ENCODE measurements at regions of chr12 and their contacts with region 1.

Region 1: DNA sequence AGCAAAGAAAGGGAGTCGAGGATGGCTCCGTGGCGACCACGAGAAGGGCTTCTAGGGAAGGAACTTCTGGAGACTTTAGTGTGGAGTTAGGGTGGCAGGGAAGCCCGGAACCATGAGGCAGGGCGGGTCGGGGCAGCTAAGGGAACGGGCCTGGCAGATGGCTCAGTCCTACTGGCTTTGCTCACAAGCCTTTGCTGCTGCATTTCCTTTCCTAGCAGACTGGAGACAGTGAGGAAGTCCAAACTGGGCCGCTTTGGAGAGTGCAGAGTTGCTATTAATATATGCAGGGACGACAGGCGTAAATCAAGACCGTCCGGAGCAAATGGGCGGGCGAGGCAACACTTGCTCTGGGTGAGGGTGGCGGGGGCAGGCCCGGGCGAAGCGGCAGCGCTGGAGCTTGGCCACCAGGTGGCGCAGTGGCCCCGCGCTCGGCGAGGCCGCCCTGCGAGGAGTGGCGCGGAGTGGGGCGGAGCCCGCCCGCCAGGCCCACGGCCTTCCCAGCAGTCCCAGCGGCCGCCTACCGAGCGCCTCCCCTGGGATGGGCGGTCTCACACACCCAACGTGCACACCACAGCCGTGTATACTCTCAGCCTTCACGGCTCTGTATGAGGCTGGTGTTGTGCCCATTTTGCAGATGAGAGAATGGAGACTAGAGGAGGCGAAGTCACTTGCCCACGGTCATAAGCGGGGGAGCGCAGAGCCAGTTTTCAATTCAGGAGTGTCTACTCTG is 24.4 kb upstream of the LRTM2 start:
- DNase-seq: peak; percentile 81 to 95 (median 88)
- H3K4me3 ChIP-seq: peak overlapping the region; percentile 42 to 84 (median 61)
- H3K27ac ChIP-seq: peak overlapping the region; percentile 17 to 91 (median 77)
- H3K27me3 ChIP-seq: no peaks in the 10 kb centered on the region
- CTCF ChIP-seq: peak; percentile 95 to 100 (median 99)

Region 2: DNA sequence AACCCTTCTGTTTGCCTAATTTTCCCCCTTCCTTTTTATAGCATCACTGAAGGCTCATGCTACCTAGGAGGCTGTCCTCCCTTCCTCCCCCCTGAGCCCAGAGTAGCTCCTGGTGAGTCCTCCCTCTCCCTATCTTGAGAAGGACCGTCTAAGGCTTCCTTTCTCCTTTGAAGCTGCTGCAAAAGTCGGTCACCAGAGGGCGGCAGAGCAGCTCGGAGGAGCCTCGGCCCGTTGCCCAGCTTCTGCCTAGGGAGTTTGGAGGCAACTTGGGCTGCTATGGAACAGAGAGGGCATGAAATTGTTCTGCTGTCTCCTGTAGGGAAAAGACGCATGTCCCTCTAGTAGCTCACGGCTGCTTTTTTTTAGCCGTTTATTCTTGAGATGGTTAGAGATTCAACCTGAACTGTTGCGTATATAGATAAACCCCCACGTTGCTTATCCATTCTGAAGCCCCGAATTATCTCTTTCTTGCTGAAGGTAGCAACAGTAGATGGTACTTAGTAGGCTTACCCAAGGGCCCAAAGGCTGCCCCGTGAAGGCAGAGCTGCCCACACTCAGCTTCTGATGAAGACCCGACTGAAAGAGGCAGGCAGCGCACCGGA is 161.3 kb before region 1 on chr12:
- intact Hi-C with region 1: loop called (anchors 5 kb)
- DNase-seq: peak; percentile 78 to 90 (median 86)
- H3K4me3 ChIP-seq: peak overlapping the region in 2 of 59 donors; percentile 6 to 15
- H3K27ac ChIP-seq: peak overlapping the region in 3 of 59 donors; percentile 3 to 25 (median 20)
- H3K27me3 ChIP-seq: no peaks in the 10 kb centered on the region
- CTCF ChIP-seq: peak; percentile 49 to 94 (median 86)

Region 3: GRCh38 chr12:1690578-1691122 is 105.3 kb before region 1 on chr12 and contains the start of gene ADIPOR2:
- intact Hi-C with region 1: loop called (anchors 2 to 5 kb)
- DNase-seq: peak; percentile 84 to 95 (median 92)
- H3K4me3 ChIP-seq: peak within 1 kb of the TSS; percentile 62 to 100 (median 95)
- H3K27ac ChIP-seq: peak within 1 kb of the TSS; percentile 58 to 97 (median 92)
- H3K27me3 ChIP-seq: peaks cover 0 to 3% (median 0%) of the 10 kb centered on the region in 45 donors
- CTCF ChIP-seq: peak in 17 of 56 donors; percentile 6 to 43 (median 23)
- total RNA-seq, gene ADIPOR2: 39.0 to 240 (median 95.0) TPM

Region 4: GRCh38 chr12:2034633-2035430 is 238.9 kb after region 1 on chr12:
- intact Hi-C with region 1: loop called (anchors 2 kb)
- DNase-seq: peak; percentile 76 to 92 (median 87)
- H3K4me3 ChIP-seq: peak overlapping the region; percentile 38 to 77 (median 61)
- H3K27ac ChIP-seq: peak overlapping the region in 54 of 59 donors; percentile 5 to 85 (median 66)
- H3K27me3 ChIP-seq: no peaks in the 10 kb centered on the region
- CTCF ChIP-seq: peak; percentile 67 to 98 (median 93)

Region 5: GRCh38 chr12:2583091-2583497 is 787.1 kb after region 1 on chr12:
- intact Hi-C with region 1: loop called in 1 of 2 experiments (anchors 10 kb)
- DNase-seq: peak in 9 of 10 donors; percentile 38 to 77 (median 55)
- H3K4me3 ChIP-seq: peak overlapping the region in 45 of 59 donors; percentile 3 to 54 (median 33)
- H3K27ac ChIP-seq: peak overlapping the region in 11 of 59 donors; percentile 6 to 75 (median 40)
- H3K27me3 ChIP-seq: no peaks in the 10 kb centered on the region
- CTCF ChIP-seq: peak; percentile 52 to 92 (median 85)

Measured in dorsolateral prefrontal cortex (tissue), 120 donors.